Calu3 (cell line): ENCODE measurements at regions of chr13 and their contacts with region 1.

Region 1: GRCh38 chr13:98293103-98293502 is 116.0 kb upstream of the RNF113B start:
- DNase-seq: no peak
- H3K4me3 Mint-ChIP-seq: no peak overlapping the region
- H3K27ac Mint-ChIP-seq: no peak overlapping the region
- H3K4me1 Mint-ChIP-seq: peaks cover 11% of the 10 kb centered on the region
- H3K27me3 Mint-ChIP-seq: no peaks in the 10 kb centered on the region
- CTCF ChIP-seq: no peak

Region 2: DNA sequence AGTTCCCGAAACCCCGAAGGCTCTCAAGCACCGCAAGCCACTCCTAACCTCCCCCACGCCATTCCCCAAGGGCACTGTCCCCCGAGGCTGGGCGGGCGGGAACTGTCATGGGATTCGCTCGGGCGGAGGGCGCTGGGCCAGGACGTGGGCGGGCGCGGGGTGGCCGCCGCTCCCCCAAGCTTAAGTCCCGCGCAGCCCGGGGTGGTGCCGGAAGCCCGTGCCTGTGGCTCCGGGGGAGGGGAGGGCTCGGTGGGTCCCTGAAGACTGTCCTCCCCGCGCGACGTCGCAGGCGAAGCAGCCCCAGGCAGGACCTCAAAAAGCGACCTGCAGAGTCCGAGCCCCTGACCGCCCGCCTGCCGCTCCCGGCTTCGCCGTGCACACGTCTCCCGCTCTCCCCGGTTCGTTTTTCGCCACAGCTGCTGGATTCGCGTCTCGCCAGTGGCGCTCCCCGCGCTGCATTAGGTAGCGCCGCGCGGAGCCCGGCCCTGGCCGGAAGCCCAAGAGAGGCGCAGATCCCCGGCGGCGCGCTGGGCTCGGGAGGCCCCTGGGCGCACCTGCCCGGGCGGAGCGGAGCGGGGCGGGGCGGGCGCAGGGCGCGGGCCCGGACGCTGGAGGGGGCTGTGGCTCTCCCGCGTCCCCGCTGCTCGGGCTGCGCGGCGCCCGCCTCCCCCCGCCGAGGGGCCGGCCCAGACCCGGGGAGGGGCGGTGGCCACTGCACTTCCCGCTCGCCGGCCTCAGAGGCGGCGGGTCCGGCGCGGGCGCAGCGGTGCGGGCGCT is 150.5 kb before region 1 on chr13 and contains the start of gene FARP1:
- CTCF ChIA-PET with region 1: no interaction called
- intact Hi-C with region 1: loop called (anchors 10 kb)
- DNase-seq: peak; percentile 77
- H3K4me3 Mint-ChIP-seq: peak within 1 kb of the TSS; percentile 78
- H3K27ac Mint-ChIP-seq: no peak within 1 kb of the TSS
- H3K4me1 Mint-ChIP-seq: no peaks in the 10 kb centered on the region
- H3K27me3 Mint-ChIP-seq: no peaks in the 10 kb centered on the region
- CTCF ChIP-seq: no peak
- total RNA-seq, gene FARP1: 30.9 and 47.0 TPM in 2 replicates